ENCODE measurements at regions of chr6 and their contacts with region 1.

Region 1: GRCh38 chr6:52482903-52483670 is 62.9 kb downstream of the EFHC1 start:
- DNase-seq: no peak
- ATAC-seq: no peak
- H3K4me3 ChIP-seq: no peak overlapping the region
- H3K27ac ChIP-seq: no peak overlapping the region
- H3K4me1 ChIP-seq: no peaks in the 10 kb centered on the region
- H3K27me3 ChIP-seq: no peaks in the 10 kb centered on the region

Region 2: GRCh38 chr6:52361945-52362442 is 121.1 kb before region 1 on chr6 and contains the start of gene PAQR8:
- intact Hi-C with region 1: no loop called
- DNase-seq: peak; percentile 89 to 90
- ATAC-seq: peak; percentile 94
- H3K4me3 ChIP-seq: peak within 1 kb of the TSS; percentile 72 to 86
- H3K27ac ChIP-seq: no peak within 1 kb of the TSS
- H3K4me1 ChIP-seq: no peaks in the 10 kb centered on the region
- H3K27me3 ChIP-seq: no peaks in the 10 kb centered on the region
- total RNA-seq, gene PAQR8: 2.5 to 6.5 TPM

Region 3: DNA sequence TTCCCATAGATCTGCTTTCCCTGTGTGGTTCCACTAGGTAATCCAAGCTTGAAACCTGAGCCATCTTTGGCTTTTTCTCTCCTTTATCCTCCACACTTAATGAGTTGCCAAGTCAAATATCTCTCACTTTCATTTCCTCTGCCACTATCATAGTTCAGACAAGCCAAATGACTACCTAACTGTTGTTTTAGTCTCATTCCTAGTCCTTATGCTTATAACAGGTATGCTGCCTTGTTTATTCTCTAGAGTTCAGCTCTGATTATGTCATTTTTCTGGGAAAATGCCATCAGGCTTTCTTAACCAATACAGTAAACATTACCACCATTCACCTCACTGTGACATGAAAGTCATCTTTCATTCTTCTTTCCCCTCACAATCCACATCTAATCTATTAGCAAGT is 56.4 kb before region 1 on chr6:
- intact Hi-C with region 1: loop called in 1 of 2 experiments (anchors 5 kb)
- DNase-seq: no peak
- ATAC-seq: no peak
- H3K4me3 ChIP-seq: no peak overlapping the region
- H3K27ac ChIP-seq: no peak overlapping the region
- H3K4me1 ChIP-seq: no peaks in the 10 kb centered on the region
- H3K27me3 ChIP-seq: no peaks in the 10 kb centered on the region

Region 4: DNA sequence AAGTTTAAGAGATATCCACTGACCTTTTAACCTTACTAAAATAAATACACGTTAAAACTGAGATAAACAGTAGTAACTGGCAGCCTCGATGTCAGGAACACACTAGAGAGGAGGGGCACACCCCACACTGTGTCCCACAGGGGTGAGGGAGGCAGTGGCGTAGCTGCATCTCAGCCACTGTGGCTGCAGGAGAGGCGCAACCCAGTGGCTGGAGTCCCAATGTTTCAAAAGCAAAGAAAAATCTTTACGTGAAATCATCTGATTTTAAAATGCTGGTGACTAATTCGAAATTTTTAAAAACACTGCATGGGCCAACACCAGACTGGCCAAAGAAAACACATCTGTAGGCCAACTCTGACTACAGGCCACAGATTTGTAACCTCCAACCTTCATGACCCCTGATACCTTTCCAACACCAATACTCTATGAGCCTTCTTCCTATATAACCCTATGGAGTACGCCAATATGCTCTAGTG is 39.1 kb after region 1 on chr6:
- intact Hi-C with region 1: no loop called
- DNase-seq: peak; percentile 84 to 89
- ATAC-seq: peak; percentile 84
- H3K4me3 ChIP-seq: no peak overlapping the region
- H3K27ac ChIP-seq: peak overlapping the region; percentile 78 to 82
- H3K4me1 ChIP-seq: peaks cover 3 to 6% of the 10 kb centered on the region in 2 donors
- H3K27me3 ChIP-seq: no peaks in the 10 kb centered on the region

Measured in aorta (tissue), 5 donors.